ENCODE measurements at regions of chr4 and their contacts with region 1.

Region 1: DNA sequence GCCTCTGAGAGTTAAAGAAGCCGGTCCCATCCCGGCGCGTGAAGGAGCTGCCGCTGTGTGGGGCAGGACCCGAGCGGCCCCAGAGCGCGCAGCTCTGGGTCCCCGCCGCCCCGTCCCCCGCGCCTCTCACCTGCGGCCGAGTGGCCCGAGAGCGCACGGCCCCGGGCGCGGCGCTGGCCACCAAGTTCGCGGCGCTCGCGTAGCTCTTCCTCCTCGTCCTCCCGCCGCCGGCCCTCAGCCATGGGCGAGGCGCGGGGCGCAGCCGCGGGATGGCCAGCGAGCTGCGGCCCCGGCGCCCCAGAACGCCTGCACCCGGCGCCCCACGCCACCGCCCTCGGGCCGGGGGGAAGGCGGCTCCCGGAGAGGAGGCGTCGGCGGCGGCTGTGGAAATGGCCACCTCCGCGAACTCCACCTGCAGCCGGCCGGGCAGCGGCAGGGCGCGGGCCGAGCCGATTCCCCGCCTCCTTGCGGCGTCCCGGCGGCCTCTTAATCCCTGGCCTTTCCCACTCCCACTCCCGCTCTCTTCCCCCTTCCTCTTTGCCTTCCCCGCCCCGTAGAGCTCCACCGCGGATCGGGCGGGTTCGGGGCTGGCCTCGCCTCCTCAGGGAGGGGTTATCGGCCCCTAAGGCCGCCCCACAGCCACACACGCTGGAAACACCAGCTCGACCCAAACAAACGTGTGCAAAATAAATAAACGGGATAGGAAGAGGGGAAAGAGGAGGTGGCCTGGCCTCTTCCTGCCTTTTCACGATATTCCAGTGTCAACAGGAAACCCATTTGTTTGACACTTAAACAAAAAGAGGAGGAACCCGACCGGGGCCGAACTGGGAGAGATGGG is at the start of gene SH3D19:
- DNase-seq: peak; percentile 21 to 92 (median 42)

Region 2: DNA sequence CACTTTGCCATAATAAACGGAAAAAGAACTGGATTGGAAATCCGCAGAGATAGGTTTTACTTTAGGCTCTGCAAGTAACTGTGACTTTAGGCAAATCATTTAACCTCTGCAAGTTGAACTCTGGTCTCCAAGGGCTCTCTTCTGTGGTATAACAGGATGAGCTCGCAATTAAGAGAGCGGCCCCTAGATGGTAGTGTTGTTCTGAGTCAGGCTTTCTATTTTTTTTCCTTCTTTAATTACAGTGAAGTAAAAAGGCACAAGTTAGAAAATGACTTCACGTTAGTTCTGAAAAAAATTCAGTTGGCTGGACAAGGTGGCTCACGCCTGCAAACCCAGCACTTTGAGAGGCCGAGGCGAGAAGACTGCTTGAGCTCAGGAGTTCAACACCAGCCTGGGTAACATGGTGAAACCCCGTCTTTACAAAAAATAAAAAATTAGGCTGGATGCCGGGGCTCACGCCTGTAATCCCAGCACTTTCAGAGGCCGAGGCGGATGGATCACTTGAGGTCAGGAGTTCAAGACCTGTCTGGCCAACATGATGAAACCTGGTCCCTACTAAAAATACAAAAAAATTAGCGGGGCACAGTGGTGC is 207.9 kb before region 1 on chr4:
- intact Hi-C with region 1: no loop called
- DNase-seq: peak in 6 of 10 donors; percentile 29 to 74 (median 50)

Region 3: DNA sequence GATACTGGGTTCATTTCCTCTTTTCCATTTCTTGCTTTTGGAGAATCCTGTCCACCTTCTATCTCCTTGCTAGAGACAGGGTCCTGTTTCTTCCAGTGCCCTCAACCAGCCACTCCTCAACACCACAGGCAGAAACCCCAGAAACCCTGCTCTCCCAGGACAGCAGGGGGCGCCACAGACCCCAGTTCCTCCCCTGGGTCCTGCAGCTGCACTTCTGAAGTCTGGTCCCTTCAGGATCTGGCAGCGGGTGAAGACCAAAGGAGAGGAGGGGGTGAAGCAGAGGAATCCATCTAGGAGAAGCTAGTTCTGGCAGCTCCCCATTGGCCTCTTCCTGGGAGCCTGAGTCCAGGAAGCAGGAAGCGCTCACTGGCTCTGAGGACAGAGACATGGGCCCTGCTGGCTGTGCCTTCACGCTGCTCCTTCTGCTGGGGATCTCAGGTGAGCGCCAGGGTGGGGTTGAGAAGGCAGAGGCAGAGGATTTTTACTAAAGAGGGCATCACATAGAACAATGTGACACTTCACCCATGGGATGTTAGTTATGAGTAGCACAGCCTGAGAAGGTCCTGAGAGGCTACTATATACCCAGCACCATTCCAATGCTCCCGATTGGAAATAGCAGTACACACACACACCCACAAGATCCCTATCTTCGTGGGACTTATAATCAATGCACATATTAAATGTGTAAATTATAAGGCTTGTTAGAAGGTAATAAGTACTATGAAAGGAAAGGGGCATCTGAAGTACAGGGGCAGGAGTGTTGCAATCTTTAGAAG is 48.4 kb before region 1 on chr4 and contains the start of gene PRSS48:
- intact Hi-C with region 1: loop called (anchors 5 kb)
- DNase-seq: peak; percentile 69 to 97 (median 83)

Measured in posterior cingulate gyrus (tissue), 11 donors.